Adrenal gland (tissue), 19 donors: ENCODE measurements at regions of chr15 and their contacts with region 1.

Region 1: DNA sequence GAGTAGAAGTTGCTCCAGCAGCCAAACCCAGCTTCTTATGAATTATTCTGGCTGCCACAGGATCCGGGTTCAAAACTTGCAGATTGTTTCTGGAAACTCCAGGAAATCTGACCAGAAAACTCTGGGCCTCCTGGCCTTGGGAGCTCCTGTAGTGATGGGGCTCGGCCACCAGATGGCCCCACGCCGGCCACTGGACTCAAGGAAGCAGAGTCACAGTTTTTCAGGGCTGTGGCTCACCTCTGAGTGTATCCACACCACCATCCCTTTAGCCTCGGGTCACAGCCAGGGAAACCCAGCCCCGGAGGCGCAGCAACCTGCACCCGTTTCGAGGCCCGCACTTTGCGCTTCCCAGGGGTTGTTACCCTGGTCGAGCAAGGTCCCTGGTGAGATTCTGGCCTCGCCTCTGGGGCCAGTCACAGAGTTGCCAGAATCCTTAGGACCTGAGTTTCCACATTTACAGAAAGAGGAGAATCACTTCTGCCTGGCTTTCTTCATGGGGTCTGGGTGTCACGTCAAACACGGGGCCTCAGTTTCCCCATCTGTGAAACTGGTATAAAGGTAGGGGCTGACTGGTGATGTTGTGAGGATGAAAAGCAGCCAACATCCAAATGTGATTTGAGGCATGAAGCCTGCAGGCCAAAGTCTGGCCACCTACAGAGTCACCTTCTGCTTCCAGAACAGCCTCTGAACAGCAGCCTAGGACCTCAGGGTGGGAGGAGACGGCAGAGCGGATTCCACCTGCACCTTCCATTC is 53.5 kb upstream of the LCTL start:
- DNase-seq: peak; percentile 74 to 89 (median 83)
- H3K4me3 ChIP-seq: no peak overlapping the region
- H3K27ac ChIP-seq: peak overlapping the region in 1 of 5 donors; percentile 7
- H3K4me1 ChIP-seq: peaks cover 0 to 13% of the 10 kb centered on the region in 2 donors
- H3K27me3 ChIP-seq: peaks cover 13% of the 10 kb centered on the region
- CTCF ChIP-seq: peak; percentile 77 to 89 (median 84)
- POLR2A ChIP-seq: no peak

Region 2: DNA sequence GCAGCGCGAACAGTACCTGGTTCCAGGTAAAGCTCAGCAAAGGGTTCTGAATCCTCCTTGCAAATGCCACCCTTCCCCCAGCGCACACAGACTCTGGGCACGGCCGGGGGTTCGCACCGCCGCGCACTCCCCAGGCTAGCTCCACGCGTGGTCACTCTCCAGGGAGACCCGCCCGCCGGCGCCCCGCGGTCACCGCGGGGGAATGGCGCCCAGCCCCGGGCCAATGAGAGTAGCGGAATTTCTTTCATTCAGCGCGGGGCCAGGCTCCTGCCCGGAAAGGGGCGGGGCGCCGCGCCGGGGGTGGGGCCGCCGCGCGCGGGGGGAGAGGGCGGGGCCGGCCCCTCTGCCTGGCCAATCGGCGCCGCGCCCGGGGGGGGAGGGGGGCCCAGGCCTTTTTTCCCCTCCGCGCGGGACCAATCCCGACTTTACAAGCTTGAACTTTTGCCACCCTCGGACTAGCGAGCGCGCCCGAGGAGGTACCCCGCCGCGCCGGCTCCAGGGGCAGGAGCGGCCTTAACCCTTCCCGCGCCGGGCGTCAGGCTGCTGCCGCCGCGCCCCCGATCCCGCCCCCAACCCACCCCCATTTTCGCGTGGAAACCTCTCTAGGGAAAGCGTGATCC is 81.6 kb after region 1 on chr15:
- intact Hi-C with region 1: loop called (anchors 5 kb)
- DNase-seq: peak; percentile 96 to 98 (median 97)
- H3K4me3 ChIP-seq: peak overlapping the region in 3 of 4 donors; percentile 19 to 67 (median 58)
- H3K27ac ChIP-seq: peak overlapping the region in 4 of 5 donors; percentile 42 to 90 (median 61)
- H3K4me1 ChIP-seq: peaks cover 4 to 19% of the 10 kb centered on the region in 2 donors
- H3K27me3 ChIP-seq: no peaks in the 10 kb centered on the region
- CTCF ChIP-seq: no peak
- POLR2A ChIP-seq: peak in 1 of 2 donors; percentile 23

Region 3: DNA sequence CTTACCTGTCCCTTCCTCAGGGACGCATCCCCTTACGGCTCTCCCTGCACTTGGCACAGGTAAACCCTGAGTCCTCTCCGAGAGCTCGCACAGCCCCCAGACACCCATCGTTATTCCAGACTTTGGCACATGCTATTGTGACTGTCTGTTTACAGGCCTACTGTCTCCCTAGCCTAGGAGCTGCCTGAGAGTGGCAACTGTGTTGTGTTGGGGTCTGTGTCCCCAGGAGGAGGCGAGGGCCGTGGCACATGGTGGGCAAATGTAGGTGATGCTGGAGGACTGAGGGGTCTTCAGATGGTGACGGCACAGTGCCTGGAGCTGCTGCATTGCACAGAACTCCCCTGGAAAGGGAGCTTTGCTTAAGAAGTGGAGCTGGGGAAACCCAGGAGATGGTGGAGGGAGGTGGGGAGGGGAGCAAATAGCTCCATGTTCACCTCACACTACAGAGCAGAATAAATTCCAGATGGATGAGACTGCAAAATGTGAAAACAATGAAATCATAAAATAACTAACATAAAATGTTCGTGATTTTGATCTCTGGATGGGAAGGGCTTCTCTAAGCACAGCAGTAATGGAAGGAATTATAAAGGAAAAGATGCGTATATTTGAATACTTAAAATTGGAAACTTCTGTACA is 179.2 kb after region 1 on chr15:
- intact Hi-C with region 1: no loop called
- DNase-seq: no peak
- H3K4me3 ChIP-seq: no peak overlapping the region
- H3K27ac ChIP-seq: no peak overlapping the region
- H3K4me1 ChIP-seq: peaks cover 10 to 13% of the 10 kb centered on the region in 2 donors
- H3K27me3 ChIP-seq: no peaks in the 10 kb centered on the region
- CTCF ChIP-seq: no peak
- POLR2A ChIP-seq: no peak

Region 4: GRCh38 chr15:67033571-67034044 is 414.3 kb after region 1 on chr15:
- intact Hi-C with region 1: no loop called
- DNase-seq: no peak
- H3K4me3 ChIP-seq: peak overlapping the region in 1 of 4 donors; percentile 48
- H3K27ac ChIP-seq: no peak overlapping the region
- H3K4me1 ChIP-seq: peaks cover 0 to 10% of the 10 kb centered on the region in 2 donors
- H3K27me3 ChIP-seq: no peaks in the 10 kb centered on the region
- CTCF ChIP-seq: no peak
- POLR2A ChIP-seq: no peak